GM13977 (cell line): ENCODE measurements at regions of chr14 and their contacts with region 1.

Region 1: DNA sequence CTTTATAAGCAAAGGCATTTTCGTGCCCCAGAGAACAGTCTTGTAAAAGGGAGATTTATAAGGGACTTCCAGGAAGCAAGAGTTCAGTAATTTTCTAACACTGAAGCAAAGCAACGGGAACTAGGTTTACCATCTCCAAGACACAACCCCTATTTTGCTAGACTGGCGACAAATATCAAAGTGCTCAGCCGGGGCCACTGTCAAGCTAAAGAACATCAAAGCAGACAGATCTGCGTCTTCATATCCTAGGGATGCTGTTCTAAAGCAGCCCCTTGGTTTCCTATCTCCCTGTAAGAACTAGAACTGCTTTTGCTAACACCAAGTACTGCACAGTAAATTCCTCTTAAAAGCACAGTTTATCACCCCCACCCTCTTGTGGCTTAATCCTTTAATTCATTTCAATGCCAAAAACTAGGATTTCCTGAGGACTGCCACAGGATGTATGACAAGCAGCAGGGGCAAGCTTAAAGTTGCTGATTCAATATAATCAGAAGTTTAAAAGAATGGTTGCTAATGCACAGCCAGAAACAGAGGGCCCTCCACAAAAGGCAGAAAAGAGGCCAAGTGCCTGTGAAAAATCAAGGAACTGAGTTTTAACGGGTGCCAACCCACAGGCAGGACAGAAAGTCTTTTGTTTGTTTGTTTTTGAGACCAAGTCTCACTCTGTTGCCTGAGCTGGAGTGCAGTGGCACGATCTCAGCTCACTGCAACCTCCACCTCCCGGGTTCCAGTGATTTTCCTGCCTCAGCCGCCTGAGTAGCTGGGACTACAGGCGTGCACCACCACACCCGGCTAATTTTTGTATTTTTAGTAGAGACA is 44.0 kb upstream of the ISM2 start:
- DNase-seq: no peak
- CTCF ChIP-seq: no peak

Region 2: GRCh38 chr14:77133720-77134338 is 408.8 kb before region 1 on chr14:
- in situ Hi-C with region 1: loop called (anchors 25 kb)
- DNase-seq: peak; percentile 84
- CTCF ChIP-seq: no peak

Region 3: GRCh38 chr14:77301103-77301502 is 241.5 kb before region 1 on chr14:
- in situ Hi-C with region 1: loop called (anchors 10 kb)
- DNase-seq: peak; percentile 67
- CTCF ChIP-seq: peak; percentile 87